Tibial artery (tissue), 4 donors: ENCODE measurements at regions of chr6 and their contacts with region 1.

Region 1: GRCh38 chr6:29909985-29910384 is 32.3 kb upstream of the HLA-A start:
- DNase-seq: no peak
- H3K4me3 ChIP-seq: no peak overlapping the region
- H3K27ac ChIP-seq: no peak overlapping the region
- H3K4me1 ChIP-seq: no peaks in the 10 kb centered on the region
- H3K27me3 ChIP-seq: no peaks in the 10 kb centered on the region
- CTCF ChIP-seq: no peak

Region 2: GRCh38 chr6:29870104-29870503 is 39.9 kb before region 1 on chr6:
- intact Hi-C with region 1: loop called (anchors 5 kb)
- DNase-seq: no peak
- H3K4me3 ChIP-seq: no peak overlapping the region
- H3K27ac ChIP-seq: no peak overlapping the region
- H3K4me1 ChIP-seq: no peaks in the 10 kb centered on the region
- H3K27me3 ChIP-seq: peaks cover 0 to 12% of the 10 kb centered on the region in 2 donors
- CTCF ChIP-seq: no peak